ENCODE measurements at regions of chr16 and their contacts with region 1.

Region 1: GRCh38 chr16:48526058-48526957 is 83.7 kb downstream of the N4BP1 start:
- DNase-seq: peak; percentile 85
- H3K4me3 Mint-ChIP-seq: no peak overlapping the region
- H3K27ac Mint-ChIP-seq: no peak overlapping the region
- H3K4me1 Mint-ChIP-seq: peaks cover 29% of the 10 kb centered on the region
- H3K27me3 Mint-ChIP-seq: no peaks in the 10 kb centered on the region
- CTCF ChIP-seq: peak; percentile 79

Region 2: DNA sequence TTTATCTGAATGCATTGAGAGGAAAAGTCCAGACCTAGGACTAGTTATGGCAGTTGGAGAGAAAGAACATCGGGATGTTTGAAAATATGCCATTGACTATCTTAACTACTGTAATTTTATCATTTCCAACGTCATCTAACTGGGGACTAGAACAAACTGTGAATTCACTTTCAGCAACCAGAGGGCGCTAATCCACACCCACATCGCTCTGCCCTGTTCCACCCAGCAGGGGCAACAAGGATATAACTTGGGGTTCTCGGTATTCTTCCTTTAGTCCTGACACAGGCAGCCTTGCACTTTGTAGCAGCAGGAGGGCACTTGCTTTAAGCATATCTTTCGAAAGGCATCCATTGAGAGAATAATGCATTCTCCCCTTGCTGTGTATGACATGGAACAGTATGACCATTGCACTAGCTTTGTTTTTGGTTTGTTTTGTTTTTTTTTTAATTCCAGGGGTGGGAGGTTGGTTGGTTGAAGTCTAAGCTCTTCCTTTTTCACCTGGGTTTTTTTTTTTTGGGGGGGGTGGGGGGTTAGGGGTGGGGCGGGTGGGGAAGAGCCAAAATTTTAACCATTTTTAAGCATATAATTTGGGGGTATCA is 172.6 kb before region 1 on chr16:
- CTCF ChIA-PET with region 1: interaction called, 12 read pairs
- intact Hi-C with region 1: loop called (anchors 1 kb)
- DNase-seq: peak; percentile 76
- H3K4me3 Mint-ChIP-seq: no peak overlapping the region
- H3K27ac Mint-ChIP-seq: no peak overlapping the region
- H3K4me1 Mint-ChIP-seq: no peaks in the 10 kb centered on the region
- H3K27me3 Mint-ChIP-seq: no peaks in the 10 kb centered on the region
- CTCF ChIP-seq: peak; percentile 80

Region 3: GRCh38 chr16:48384305-48384986 is 141.9 kb before region 1 on chr16:
- CTCF ChIA-PET with region 1: interaction called, 8 read pairs
- intact Hi-C with region 1: loop called (anchors 1 kb)
- DNase-seq: peak; percentile 73
- H3K4me3 Mint-ChIP-seq: peak overlapping the region; percentile 96
- H3K27ac Mint-ChIP-seq: peak overlapping the region; percentile 95
- H3K4me1 Mint-ChIP-seq: peaks cover 45% of the 10 kb centered on the region
- H3K27me3 Mint-ChIP-seq: no peaks in the 10 kb centered on the region
- CTCF ChIP-seq: no peak

Region 4: DNA sequence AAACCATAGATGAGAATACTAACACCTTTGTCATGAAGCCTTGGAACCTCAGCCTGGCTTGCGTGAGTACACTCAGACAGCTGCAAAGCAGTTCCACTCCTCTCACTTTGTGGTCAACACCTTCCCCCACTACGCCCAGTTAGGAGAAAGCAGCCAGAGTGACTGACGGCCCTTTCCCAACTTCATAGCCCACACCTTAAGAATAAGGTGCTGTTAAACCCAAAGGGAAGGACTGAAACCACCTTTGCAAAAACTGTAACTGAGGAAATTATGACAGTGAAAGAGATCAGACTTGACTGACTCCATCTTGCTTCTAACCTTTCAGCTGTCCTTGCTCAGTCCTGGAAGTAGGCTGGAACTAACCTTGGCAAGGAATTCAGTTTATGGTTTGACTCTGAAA is 70.0 kb after region 1 on chr16:
- CTCF ChIA-PET with region 1: no interaction called
- intact Hi-C with region 1: no loop called
- DNase-seq: no peak
- H3K4me3 Mint-ChIP-seq: no peak overlapping the region
- H3K27ac Mint-ChIP-seq: no peak overlapping the region
- H3K4me1 Mint-ChIP-seq: peaks cover 31% of the 10 kb centered on the region
- H3K27me3 Mint-ChIP-seq: no peaks in the 10 kb centered on the region
- CTCF ChIP-seq: no peak

Region 5: GRCh38 chr16:48623304-48624016 is 97.2 kb after region 1 on chr16:
- CTCF ChIA-PET with region 1: interaction called, 24 read pairs
- intact Hi-C with region 1: no loop called
- DNase-seq: peak; percentile 91
- H3K4me3 Mint-ChIP-seq: peak overlapping the region; percentile 80
- H3K27ac Mint-ChIP-seq: no peak overlapping the region
- H3K4me1 Mint-ChIP-seq: peaks cover 23% of the 10 kb centered on the region
- H3K27me3 Mint-ChIP-seq: peaks cover 17% of the 10 kb centered on the region
- CTCF ChIP-seq: peak; percentile 97